MCF 10A (cell line): ENCODE measurements at regions of chr4 and their contacts with region 1.

Region 1: GRCh38 chr4:7802093-7802726 is 137.5 kb downstream of the AFAP1 start:
- DNase-seq: peak; percentile 80
- H3K4me3 Mint-ChIP-seq: no peak overlapping the region
- H3K27ac Mint-ChIP-seq: no peak overlapping the region
- H3K4me1 Mint-ChIP-seq: peaks cover 17% of the 10 kb centered on the region
- H3K27me3 Mint-ChIP-seq: no peaks in the 10 kb centered on the region
- CTCF ChIP-seq: peak; percentile 87

Region 2: DNA sequence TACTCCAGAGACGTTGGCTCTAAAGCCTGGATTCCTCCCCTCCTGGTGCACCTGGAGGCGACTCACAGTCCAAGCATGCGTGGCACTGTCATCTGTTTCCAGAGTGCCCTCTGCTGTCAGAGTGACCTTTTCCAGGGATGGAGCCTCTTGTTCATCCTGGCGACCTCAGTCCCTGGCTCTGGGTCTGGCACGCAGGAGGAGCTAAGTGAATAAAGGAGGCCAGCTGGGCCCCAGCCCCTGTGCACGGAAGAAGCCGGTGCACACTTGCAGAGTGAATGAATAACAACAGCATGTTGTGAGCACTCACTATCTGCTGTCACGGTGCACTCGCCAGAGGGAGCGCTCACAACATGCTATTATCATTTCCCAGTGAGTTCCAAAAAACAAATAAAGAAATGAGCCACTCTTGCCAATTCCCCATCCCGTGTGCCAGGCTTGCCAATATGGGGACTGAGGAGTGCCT is 339.7 kb before region 1 on chr4:
- CTCF ChIA-PET with region 1: interaction called, 7 read pairs
- POLR2A ChIA-PET with region 1: no interaction called
- intact Hi-C with region 1: loop called (anchors 1 kb)
- DNase-seq: peak; percentile 68
- H3K4me3 Mint-ChIP-seq: no peak overlapping the region
- H3K27ac Mint-ChIP-seq: no peak overlapping the region
- H3K4me1 Mint-ChIP-seq: peaks cover 10% of the 10 kb centered on the region
- H3K27me3 Mint-ChIP-seq: no peaks in the 10 kb centered on the region
- CTCF ChIP-seq: peak; percentile 38

Region 3: GRCh38 chr4:7843831-7844593 is 41.8 kb after region 1 on chr4:
- CTCF ChIA-PET with region 1: interaction called, 8 read pairs
- POLR2A ChIA-PET with region 1: interaction called, 10 read pairs
- intact Hi-C with region 1: no loop called
- DNase-seq: peak; percentile 76
- H3K4me3 Mint-ChIP-seq: peak overlapping the region; percentile 65
- H3K27ac Mint-ChIP-seq: peak overlapping the region; percentile 94
- H3K4me1 Mint-ChIP-seq: peaks cover 38% of the 10 kb centered on the region
- H3K27me3 Mint-ChIP-seq: no peaks in the 10 kb centered on the region
- CTCF ChIP-seq: peak; percentile 38

Region 4: DNA sequence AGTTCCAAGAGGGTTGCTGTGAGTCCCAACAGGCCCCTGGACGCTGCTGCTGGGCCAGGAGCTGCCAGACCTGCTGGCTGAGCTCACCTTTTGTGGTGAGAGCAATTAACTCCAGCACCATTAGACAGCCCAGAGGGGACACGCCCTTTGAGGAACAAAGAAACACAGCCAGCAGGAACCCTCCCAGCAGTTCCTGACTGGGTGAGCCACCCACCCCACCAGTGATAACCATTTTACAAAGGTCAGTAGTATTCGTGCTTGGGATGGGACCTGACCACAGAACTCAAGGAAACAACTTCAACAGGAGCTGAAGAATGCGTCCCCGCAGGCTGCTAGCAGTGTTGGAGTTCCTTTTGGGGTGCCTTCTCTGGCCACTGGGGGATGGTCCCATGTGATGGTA is 176.3 kb after region 1 on chr4:
- CTCF ChIA-PET with region 1: interaction called, 183 read pairs
- POLR2A ChIA-PET with region 1: interaction called, 8 read pairs
- intact Hi-C with region 1: no loop called
- DNase-seq: peak; percentile 84
- H3K4me3 Mint-ChIP-seq: no peak overlapping the region
- H3K27ac Mint-ChIP-seq: peak overlapping the region; percentile 66
- H3K4me1 Mint-ChIP-seq: peaks cover 36% of the 10 kb centered on the region
- H3K27me3 Mint-ChIP-seq: peaks cover 3% of the 10 kb centered on the region
- CTCF ChIP-seq: no peak

Region 5: GRCh38 chr4:8182858-8183725 is 380.9 kb after region 1 on chr4:
- CTCF ChIA-PET with region 1: interaction called, 3 read pairs
- POLR2A ChIA-PET with region 1: no interaction called
- intact Hi-C with region 1: loop called (anchors 10 kb)
- DNase-seq: peak; percentile 97
- H3K4me3 Mint-ChIP-seq: peak overlapping the region; percentile 13
- H3K27ac Mint-ChIP-seq: peak overlapping the region; percentile 90
- H3K4me1 Mint-ChIP-seq: peaks cover 27% of the 10 kb centered on the region
- H3K27me3 Mint-ChIP-seq: no peaks in the 10 kb centered on the region
- CTCF ChIP-seq: no peak